Activated CD4-positive, alpha-beta memory T cell treated with anti-CD3 and anti-CD28 coated beads, Interleukin-2, amount 10 ng/mL, durations not matched to agents 7 days and 5 days (primary cell): ENCODE measurements at regions of chr1 and their contacts with region 1.

Region 1: DNA sequence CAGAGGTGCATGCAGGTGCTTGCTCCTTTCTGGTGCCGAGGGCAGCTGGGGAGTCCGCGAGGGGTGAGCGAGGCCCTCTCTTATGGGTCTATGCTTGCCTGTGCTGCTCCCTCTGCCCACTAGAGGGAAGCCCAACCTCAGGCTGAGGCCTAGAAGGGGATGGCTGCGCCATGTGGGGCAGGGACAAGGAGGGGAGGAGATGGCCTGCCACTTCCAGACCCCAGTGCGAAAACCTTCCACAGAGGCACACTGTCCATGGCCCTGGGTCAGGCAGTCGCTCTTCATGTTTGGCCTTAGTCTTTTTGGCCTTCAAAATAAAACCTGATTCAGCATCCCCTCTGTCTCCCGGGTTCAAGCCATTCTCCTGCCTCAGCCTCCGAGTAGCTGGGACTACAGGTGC is 14.0 kb downstream of the RHBG start:
- DNase-seq: peak; percentile 61
- H3K4me3 Mint-ChIP-seq: no peak overlapping the region
- H3K27ac Mint-ChIP-seq: no peak overlapping the region
- H3K4me1 Mint-ChIP-seq: peaks cover 4% of the 10 kb centered on the region
- H3K27me3 Mint-ChIP-seq: peaks cover 16% of the 10 kb centered on the region

Region 2: DNA sequence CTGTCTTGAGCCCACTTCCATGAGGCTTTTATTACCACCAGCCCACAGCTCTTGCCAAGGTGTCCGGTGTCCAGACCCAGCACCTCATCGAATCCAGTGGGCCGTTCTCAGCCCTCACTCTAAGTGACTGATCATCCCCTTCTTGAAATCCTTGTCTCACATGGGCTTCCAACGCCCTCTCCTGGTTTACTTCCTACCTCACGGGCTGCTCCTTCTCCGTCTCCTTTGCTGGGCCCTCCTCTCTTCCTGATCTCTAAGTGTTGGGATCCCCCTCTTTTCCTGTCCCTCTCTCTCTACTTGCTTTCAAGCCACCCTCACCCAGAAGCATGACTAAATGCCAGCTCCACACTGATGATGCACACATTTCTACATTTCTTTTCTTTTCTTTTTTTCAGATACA is 23.1 kb before region 1 on chr1:
- CTCF ChIA-PET with region 1: interaction called, 17 read pairs
- POLR2A ChIA-PET with region 1: no interaction called
- DNase-seq: no peak
- H3K4me3 Mint-ChIP-seq: no peak overlapping the region
- H3K27ac Mint-ChIP-seq: no peak overlapping the region
- H3K4me1 Mint-ChIP-seq: peaks cover 5% of the 10 kb centered on the region
- H3K27me3 Mint-ChIP-seq: peaks cover 38% of the 10 kb centered on the region

Region 3: DNA sequence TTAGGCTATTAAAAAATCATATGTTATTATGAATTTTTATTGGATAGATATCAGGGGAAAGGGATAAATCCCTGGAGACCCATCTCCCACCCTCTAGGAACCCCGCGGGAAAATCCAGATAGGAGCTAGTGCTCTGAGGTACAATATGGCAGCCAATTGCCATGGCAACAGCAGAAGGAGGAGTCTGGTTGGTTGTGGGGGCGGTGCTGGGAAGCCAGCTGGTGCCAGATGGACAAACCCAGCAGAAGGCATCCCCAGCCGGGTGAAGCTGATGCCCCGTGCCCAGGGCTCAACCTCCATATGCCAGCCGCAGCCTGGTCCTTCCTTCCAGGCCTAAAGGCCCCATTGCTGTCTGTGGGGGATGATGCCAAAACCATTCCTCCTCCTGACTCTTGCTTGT is 24.3 kb after region 1 on chr1:
- CTCF ChIA-PET with region 1: interaction called, 14 read pairs
- POLR2A ChIA-PET with region 1: no interaction called
- DNase-seq: no peak
- H3K4me3 Mint-ChIP-seq: no peak overlapping the region
- H3K27ac Mint-ChIP-seq: no peak overlapping the region
- H3K4me1 Mint-ChIP-seq: no peaks in the 10 kb centered on the region
- H3K27me3 Mint-ChIP-seq: peaks cover 36% of the 10 kb centered on the region

Region 4: DNA sequence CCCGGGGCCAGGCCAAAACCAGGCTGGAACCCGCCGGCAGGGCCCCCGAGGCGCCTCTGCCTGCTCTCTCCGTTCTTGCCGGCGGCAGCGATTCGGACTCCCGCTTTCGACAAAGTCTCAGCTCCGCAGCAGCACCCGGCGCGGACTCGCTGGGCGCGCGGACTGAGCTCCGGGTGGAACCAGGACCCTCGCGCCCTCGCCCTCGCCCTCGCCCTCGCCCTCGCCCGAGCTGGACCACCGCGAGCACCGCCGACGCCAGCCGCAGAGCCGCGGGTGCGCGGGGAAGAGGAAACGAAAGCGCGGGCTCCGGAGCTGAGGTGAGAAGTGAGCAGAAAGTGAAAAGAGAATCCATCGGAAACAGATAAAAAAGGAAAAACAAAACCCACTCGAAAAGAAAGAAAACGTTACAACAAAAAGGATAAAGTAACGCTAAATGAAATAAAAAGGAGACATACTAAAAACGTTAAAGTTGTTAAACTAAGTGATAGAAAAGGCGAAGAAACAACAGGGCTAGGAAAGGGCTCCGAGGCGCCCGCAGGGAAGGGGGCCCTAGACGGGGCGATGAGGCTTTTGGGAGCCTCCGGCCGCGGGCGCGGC is 52.6 kb after region 1 on chr1:
- CTCF ChIA-PET with region 1: interaction called, 77 read pairs
- POLR2A ChIA-PET with region 1: interaction called, 4 read pairs
- DNase-seq: peak; percentile 39
- H3K4me3 Mint-ChIP-seq: peak overlapping the region; percentile 65
- H3K27ac Mint-ChIP-seq: no peak overlapping the region
- H3K4me1 Mint-ChIP-seq: peaks cover 27% of the 10 kb centered on the region
- H3K27me3 Mint-ChIP-seq: peaks cover 88% of the 10 kb centered on the region

Region 5: GRCh38 chr1:156456622-156457465 is 73.8 kb after region 1 on chr1:
- CTCF ChIA-PET with region 1: interaction called, 20 read pairs
- POLR2A ChIA-PET with region 1: interaction called, 3 read pairs
- DNase-seq: peak; percentile 94
- H3K4me3 Mint-ChIP-seq: peak overlapping the region; percentile 83
- H3K27ac Mint-ChIP-seq: peak overlapping the region; percentile 97
- H3K4me1 Mint-ChIP-seq: peaks cover 30% of the 10 kb centered on the region
- H3K27me3 Mint-ChIP-seq: peaks cover 6% of the 10 kb centered on the region

Region 6: DNA sequence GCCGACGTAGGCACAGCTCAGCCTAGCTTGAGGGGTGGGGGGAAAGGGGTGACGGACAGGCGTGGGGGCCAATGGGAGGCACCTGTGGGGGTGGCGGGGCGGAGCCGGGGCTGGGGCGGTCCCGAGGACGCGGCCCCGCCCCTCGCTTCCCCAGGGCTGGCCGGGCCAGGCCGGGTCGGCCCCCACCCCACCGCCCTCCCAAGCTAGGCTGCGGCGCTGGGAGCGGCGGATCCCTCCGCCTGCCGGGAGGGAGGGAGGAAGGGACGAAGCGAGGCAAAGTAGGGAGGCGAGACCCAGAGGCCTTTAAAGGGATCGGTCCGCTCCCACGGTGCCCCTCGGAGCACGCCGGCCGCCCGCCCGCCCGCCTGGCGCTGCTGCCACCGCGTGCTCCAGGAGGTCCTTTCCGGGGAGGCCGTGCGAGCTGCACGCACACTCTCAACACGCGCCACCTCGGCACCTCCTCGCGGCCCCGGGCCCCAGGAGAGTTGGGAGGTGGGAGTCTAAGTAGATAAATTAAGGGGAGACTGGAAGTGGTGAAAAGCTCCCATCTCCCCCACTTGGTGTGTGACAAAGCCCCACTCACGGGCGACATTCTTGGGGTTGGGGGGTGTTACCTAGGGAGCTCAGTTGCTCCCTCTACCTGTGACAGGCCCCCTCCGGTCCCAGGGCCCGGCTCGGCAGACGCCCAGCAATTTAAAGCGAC is 117.9 kb after region 1 on chr1:
- CTCF ChIA-PET with region 1: interaction called, 13 read pairs
- POLR2A ChIA-PET with region 1: interaction called, 6 read pairs
- DNase-seq: peak; percentile 93
- H3K4me3 Mint-ChIP-seq: peak overlapping the region; percentile 87
- H3K27ac Mint-ChIP-seq: peak overlapping the region; percentile 97
- H3K4me1 Mint-ChIP-seq: peaks cover 74% of the 10 kb centered on the region
- H3K27me3 Mint-ChIP-seq: no peaks in the 10 kb centered on the region

Region 7: DNA sequence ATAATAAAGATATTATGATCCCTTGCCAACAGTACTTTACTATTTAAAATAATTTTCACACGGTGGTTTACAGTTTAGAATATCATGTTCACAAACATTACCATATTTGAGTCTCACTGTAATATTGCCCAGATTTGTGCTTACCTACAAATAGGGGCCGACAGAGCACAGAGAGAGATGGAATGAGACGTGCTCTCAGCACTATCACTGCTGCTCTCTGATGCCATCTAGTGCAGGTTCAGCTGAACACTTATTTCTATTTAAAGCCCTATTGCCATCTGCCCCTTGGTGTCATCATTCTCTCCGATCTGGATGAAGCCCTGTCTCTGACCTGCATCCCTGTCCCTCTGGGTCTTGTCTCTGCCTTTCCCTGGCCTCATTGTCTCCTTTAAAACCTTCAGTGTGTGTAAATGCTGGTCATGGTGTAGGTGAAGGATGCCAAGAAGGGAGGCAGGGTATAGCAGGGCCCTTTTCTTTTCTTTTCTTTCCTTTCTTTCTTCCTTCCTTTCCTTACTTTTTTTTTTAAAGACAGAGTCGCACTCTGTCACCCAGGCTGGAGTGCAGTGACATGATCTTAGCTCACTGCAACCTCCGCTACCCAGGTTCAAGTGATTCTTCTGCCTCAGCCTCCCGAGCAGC is 225.1 kb after region 1 on chr1:
- CTCF ChIA-PET with region 1: interaction called, 18 read pairs
- POLR2A ChIA-PET with region 1: no interaction called
- DNase-seq: peak; percentile 67
- H3K4me3 Mint-ChIP-seq: no peak overlapping the region
- H3K27ac Mint-ChIP-seq: no peak overlapping the region
- H3K4me1 Mint-ChIP-seq: peaks cover 5% of the 10 kb centered on the region
- H3K27me3 Mint-ChIP-seq: peaks cover 14% of the 10 kb centered on the region